Activated T-helper 1 cell treated with anti-CD3 and anti-CD28 coated beads, Interleukin-12 subunit alpha, Interleukin-12 subunit beta, Interleukin-2, Interleukin-4 antibody, amounts not matched to agents 30 ng/mL and 10 ng/mL and 1 ng/mL, durations not matched to agents 14 hours and 24 hours and 36 hours (primary cell): ENCODE measurements at regions of chr7 and their contacts with region 1.

Region 1: GRCh38 chr7:81499262-81500116 is 270.4 kb downstream of the HGF start:
- DNase-seq: no peak
- H3K4me3 Mint-ChIP-seq: no peak overlapping the region
- H3K27ac Mint-ChIP-seq: no peak overlapping the region
- H3K4me1 Mint-ChIP-seq: no peaks in the 10 kb centered on the region
- H3K27me3 Mint-ChIP-seq: no peaks in the 10 kb centered on the region

Region 2: GRCh38 chr7:81956520-81956919 is 457.0 kb after region 1 on chr7:
- intact Hi-C with region 1: loop called (anchors 5 kb)
- DNase-seq: no peak
- H3K4me3 Mint-ChIP-seq: no peak overlapping the region
- H3K27ac Mint-ChIP-seq: no peak overlapping the region
- H3K4me1 Mint-ChIP-seq: no peaks in the 10 kb centered on the region
- H3K27me3 Mint-ChIP-seq: no peaks in the 10 kb centered on the region